Aorta (tissue), 5 donors: ENCODE measurements at regions of chr3 and their contacts with region 1.

Region 1: GRCh38 chr3:69410250-69410649 is 24.4 kb upstream of the FRMD4B start:
- DNase-seq: peak; percentile 79 to 80
- ATAC-seq: peak; percentile 83
- H3K4me3 ChIP-seq: no peak overlapping the region
- H3K27ac ChIP-seq: no peak overlapping the region
- H3K4me1 ChIP-seq: no peaks in the 10 kb centered on the region
- H3K27me3 ChIP-seq: no peaks in the 10 kb centered on the region

Region 2: GRCh38 chr3:69197455-69198185 is 212.6 kb before region 1 on chr3:
- intact Hi-C with region 1: no loop called
- DNase-seq: no peak
- ATAC-seq: no peak
- H3K4me3 ChIP-seq: no peak overlapping the region
- H3K27ac ChIP-seq: no peak overlapping the region
- H3K4me1 ChIP-seq: no peaks in the 10 kb centered on the region
- H3K27me3 ChIP-seq: no peaks in the 10 kb centered on the region

Region 3: GRCh38 chr3:69306239-69307185 is 103.7 kb before region 1 on chr3:
- intact Hi-C with region 1: loop called in 1 of 2 experiments (anchors 5 kb)
- DNase-seq: peak; percentile 77 to 79
- ATAC-seq: peak; percentile 98
- H3K4me3 ChIP-seq: no peak overlapping the region
- H3K27ac ChIP-seq: peak overlapping the region in 1 of 2 donors; percentile 47
- H3K4me1 ChIP-seq: peaks cover 3 to 4% of the 10 kb centered on the region in 2 donors
- H3K27me3 ChIP-seq: no peaks in the 10 kb centered on the region

Region 4: GRCh38 chr3:69324362-69325025 is 85.8 kb before region 1 on chr3:
- intact Hi-C with region 1: loop called in 1 of 2 experiments (anchors 5 kb)
- DNase-seq: no peak
- ATAC-seq: no peak
- H3K4me3 ChIP-seq: no peak overlapping the region
- H3K27ac ChIP-seq: no peak overlapping the region
- H3K4me1 ChIP-seq: peaks cover 0 to 5% of the 10 kb centered on the region in 2 donors
- H3K27me3 ChIP-seq: no peaks in the 10 kb centered on the region